ENCODE measurements at regions of chr10 and their contacts with region 1.

Region 1: DNA sequence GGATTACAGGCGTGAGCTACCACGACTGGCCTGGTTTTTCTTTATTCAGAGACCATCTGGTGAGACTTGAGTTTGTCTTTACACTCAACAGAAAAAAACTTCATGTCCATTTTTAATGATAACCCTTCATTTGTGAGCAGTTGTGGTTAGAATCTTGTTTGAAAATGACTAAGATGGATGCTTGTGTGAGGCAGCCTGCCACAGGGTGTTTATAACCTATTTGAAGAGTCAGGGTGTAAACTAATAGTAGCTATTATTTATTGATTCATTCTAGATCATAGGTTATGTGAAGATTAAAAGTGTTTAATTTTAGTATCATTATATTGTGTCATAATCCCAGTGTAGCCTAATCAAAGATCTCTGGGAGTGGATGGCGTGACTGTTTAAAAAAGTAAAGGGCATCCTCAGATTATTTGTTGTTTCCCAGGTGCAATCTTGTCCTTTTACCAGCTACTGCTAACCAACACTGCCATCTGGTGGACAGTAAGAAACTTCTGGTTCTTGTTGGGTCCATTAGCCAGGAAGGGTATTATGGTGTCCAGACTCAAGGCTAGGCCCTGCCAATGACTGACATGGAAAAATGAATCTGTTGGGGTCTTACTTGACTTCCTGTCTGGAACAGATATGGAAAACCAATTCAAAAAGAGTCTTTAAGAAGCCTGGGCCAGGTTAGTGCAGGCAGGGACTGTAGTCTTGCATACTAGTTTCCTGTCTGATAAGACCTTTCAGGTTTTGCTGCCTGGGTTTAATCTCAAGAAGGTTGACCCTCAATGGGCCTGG is 24.9 kb downstream of the NRBF2 start:
- DNase-seq: peak; percentile 41
- H3K4me3 ChIP-seq: no peak overlapping the region
- H3K27me3 ChIP-seq: no peaks in the 10 kb centered on the region
- CTCF ChIP-seq: peak; percentile 70

Region 2: DNA sequence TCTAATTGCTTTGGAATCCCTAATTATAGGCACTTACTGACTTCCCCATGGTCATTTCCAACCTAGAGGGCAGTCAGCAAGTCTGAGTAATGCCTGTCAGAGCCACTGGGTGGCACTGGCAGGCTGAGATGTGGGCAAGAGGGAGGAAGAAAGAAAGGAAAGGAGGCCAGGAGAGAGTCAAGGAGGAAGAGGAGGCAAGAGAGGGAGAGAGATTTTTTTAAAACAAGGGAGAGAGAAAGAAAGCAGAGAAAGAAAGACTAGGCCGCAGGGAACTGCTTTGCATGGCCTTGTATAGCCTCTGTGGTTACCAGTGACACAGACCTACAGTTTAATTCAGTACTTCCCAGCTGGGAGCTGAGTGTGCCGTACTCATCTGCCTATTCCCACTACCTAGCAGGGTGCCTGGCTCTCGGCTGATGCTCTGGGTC is 563.9 kb before region 1 on chr10:
- CTCF ChIA-PET with region 1: interaction called, 21 read pairs
- POLR2A ChIA-PET with region 1: no interaction called
- DNase-seq: no peak
- H3K4me3 ChIP-seq: no peak overlapping the region
- H3K27me3 ChIP-seq: no peaks in the 10 kb centered on the region
- CTCF ChIP-seq: peak; percentile 94

Region 3: DNA sequence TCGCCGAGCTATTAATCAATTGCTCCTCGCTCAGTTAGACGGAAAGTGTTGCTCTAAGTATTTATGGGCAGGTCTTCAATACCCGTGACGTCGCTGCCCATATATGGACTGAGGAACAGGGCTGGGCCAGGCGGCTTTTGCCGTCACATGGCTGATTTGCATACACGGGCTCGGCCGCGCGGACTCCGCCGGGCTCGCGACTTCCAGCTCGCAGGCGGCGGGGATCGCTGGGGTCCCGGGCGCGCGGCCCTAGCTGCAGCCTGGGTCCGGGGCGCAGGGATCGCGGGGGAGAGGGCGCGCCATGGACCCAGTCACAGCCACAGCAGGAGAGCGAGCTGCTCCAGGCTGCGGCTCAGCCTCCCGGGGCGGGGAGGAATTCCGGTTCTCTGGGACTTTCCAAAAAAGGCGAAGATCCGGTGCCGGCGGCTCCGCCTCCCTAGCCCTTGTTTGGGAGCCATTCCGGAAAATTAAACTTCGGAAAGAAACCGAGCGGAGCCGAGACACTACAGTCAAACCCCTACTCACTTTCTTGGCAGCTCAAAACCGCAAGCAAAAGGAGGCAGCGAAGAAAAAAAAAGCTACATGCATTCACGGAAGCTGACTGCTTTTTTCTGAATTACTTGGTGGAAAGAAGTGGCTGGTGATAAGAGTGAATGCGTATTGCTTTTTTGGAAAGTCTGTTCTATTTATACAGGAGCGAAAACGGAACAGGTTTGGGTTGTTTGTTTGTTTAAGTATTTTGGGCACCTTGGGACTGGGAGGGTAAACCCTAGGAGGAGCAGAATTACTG is 341.5 kb before region 1 on chr10 and contains the start of gene EGR2:
- CTCF ChIA-PET with region 1: interaction called, 12 read pairs
- POLR2A ChIA-PET with region 1: no interaction called
- DNase-seq: peak; percentile 66
- H3K4me3 ChIP-seq: peak within 1 kb of the TSS; percentile 59
- H3K27me3 ChIP-seq: peaks cover 20% of the 10 kb centered on the region
- CTCF ChIP-seq: no peak
- polyA plus RNA-seq, gene EGR2: 1.1 and 1.9 TPM in 2 replicates

Region 4: DNA sequence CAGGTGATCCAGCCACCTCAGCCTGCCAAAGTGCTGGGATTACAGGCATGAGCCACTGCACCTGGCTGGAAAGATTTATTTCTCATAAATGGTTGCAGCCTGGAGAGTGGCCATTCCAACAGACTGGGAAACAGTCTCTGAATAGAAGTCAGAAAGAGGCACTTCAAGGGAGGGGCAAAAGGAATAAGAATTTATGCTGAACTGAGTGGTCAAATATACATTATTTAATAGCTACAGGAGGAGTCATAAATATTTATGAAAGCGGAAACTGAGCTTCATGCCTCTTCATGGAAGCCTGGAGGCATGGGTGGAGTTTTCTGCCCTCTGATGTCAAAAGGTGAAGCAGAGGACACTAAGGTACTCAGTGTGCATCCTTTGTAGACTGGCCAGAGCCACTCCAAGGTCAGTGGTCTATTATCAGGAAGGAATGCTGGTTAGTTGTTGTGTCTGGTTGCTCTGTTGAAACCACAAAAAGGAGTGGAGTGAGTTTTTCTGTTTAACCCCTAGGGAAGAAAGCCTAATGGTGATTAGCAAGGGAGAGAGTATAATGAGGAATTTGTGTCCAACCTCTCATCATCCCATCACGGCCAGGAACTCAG is 34.2 kb before region 1 on chr10:
- CTCF ChIA-PET with region 1: no interaction called
- POLR2A ChIA-PET with region 1: no interaction called
- DNase-seq: no peak
- H3K4me3 ChIP-seq: no peak overlapping the region
- H3K27me3 ChIP-seq: no peaks in the 10 kb centered on the region
- CTCF ChIP-seq: no peak

Region 5: DNA sequence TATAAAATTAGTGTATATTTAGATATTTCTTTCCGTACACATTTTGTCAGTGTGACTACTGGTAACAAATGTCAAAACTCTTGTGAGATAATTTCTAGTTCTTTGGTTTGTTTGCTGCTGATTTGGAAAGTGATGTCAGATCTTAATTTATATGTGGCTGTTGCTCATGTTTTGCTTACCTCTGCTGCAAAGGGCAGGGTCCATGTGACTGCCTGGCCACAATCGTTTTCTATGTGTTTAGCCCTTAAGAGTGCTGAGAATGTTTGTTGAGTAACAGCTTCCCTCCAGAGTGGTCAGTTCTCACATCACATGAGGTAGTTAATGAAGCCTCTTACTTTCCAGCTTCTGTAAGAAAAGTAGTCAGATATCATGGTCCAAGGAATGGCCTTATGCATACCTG is 20.7 kb before region 1 on chr10:
- CTCF ChIA-PET with region 1: interaction called, 17 read pairs
- POLR2A ChIA-PET with region 1: no interaction called
- DNase-seq: no peak
- H3K4me3 ChIP-seq: no peak overlapping the region
- H3K27me3 ChIP-seq: no peaks in the 10 kb centered on the region
- CTCF ChIP-seq: no peak

Region 6: DNA sequence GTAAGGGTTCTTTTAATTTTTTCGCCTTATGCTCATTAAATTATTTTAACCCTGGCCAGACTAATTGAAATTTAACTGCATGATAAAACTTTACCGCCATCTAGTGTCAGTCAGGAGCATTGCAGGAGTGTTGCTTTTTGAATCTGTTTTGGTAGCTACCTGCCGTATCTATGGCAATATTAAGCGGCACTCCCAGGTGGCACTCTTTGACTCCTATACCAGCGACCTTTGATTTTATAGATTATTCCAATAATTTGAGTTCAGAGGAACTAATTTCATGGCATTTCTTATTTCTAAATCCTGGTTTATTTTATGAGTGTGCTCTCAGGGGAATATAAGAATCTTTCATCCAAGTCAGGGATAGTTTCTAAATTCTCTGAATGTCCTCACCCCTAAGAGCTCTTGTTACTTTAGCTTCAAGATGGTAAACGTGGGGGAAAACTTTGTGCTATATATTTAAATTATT is 562.1 kb after region 1 on chr10:
- CTCF ChIA-PET with region 1: interaction called, 148 read pairs
- POLR2A ChIA-PET with region 1: no interaction called
- DNase-seq: no peak
- H3K4me3 ChIP-seq: no peak overlapping the region
- H3K27me3 ChIP-seq: peaks cover 3% of the 10 kb centered on the region
- CTCF ChIP-seq: peak; percentile 86